Dendritic cell treated with granulocyte-macrophage colony-stimulating factor and Interleukin-4, amounts not matched to agents 40 ng/mL and 50 ng/mL, for 4 days (primary cell): ENCODE measurements at regions of chr12 and their contacts with region 1.

Region 1: DNA sequence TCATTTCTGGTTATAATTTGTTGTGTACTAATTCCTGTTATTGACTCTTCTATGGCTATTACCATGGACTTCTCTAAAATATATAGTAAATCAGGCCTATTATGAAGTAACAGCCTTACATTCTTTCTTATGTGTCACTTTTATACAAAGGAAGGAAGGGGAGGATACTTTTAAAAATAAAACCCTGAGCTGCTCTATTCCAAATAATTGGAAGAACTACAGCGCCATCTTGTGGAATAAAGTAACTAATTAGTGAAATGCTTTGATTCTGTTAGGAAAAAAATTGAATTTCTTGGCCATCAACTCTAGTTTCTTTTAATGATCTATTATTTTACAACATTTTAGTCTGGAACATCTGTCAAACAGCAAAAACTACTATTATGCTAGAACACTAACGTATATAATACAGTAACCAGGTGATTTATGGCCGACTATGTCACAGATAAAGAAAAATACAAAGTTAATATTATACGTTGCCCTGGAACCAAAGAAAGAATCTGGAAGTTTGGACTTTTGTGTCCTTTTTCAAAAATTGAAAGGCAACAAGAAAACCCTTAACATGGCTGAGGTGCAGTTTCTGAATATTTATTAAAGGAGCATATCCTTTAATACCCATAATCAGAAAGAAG is 55.0 kb upstream of the NELL2 start:
- H3K4me3 Mint-ChIP-seq: no peak overlapping the region
- H3K27ac Mint-ChIP-seq: no peak overlapping the region
- H3K4me1 Mint-ChIP-seq: no peaks in the 10 kb centered on the region
- H3K27me3 Mint-ChIP-seq: no peaks in the 10 kb centered on the region

Region 2: GRCh38 chr12:43957732-43958372 is 973.2 kb before region 1 on chr12:
- intact Hi-C with region 1: loop called (anchors 2 kb)
- H3K4me3 Mint-ChIP-seq: no peak overlapping the region
- H3K27ac Mint-ChIP-seq: no peak overlapping the region
- H3K4me1 Mint-ChIP-seq: no peaks in the 10 kb centered on the region
- H3K27me3 Mint-ChIP-seq: peaks cover 5% of the 10 kb centered on the region

Region 3: GRCh38 chr12:44015335-44015941 is 915.6 kb before region 1 on chr12:
- intact Hi-C with region 1: loop called (anchors 2 kb)
- H3K4me3 Mint-ChIP-seq: no peak overlapping the region
- H3K27ac Mint-ChIP-seq: no peak overlapping the region
- H3K4me1 Mint-ChIP-seq: no peaks in the 10 kb centered on the region
- H3K27me3 Mint-ChIP-seq: peaks cover 2% of the 10 kb centered on the region

Region 4: DNA sequence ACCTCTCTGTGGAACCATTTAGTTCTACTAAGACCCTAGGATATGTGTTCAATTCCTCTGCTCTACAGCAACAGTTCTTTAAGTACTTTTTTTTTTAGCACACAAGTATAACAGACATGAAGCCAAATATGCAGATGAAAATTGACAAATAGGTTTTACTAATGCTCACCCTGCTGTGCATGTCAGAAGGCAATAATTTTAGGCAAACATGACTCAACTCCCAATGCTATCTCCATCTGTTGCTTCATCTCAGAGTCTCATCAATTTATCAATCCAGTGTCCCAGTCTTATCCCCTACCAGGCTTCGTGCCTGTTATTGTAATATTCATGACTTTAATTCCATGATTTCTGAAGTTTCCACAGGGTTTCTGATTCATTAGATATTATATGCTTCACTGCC is 62.1 kb after region 1 on chr12:
- intact Hi-C with region 1: no loop called
- H3K4me3 Mint-ChIP-seq: no peak overlapping the region
- H3K27ac Mint-ChIP-seq: no peak overlapping the region
- H3K4me1 Mint-ChIP-seq: no peaks in the 10 kb centered on the region
- H3K27me3 Mint-ChIP-seq: no peaks in the 10 kb centered on the region